ENCODE measurements at regions of chr5 and their contacts with region 1.

Region 1: DNA sequence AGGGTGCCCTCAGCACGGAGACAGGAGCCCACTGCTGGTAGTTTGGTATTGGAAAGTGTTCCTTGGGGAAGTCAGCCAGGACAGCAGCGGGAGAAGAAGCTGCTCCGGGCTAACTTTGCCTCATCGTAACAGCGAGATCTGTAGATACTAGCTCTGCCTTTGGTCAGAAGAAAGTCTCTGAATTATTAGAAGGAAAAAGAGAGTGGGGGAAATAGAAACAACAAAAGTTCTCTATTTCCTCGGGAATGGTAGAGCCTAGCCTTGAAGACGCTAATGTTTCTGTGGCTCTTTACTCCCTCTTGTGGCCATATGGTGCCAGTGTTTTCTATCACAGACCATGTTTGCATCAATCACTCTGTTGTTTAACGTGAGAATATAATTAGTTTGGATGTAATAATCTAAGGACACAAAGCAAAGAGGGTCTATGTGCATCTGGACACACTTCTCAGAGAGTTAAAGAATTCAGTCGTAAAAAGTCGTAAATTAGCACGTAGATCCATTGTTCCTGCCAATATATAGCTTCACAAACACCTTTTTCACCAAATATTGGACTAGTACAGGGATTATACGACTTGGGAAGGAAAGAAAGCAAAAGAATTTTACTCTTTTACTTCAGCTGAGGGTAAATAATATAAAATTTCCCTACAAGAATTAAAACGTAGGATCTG is 40.2 kb upstream of the HSD17B4 start:
- DNase-seq: peak; percentile 58
- H3K4me3 Mint-ChIP-seq: peak overlapping the region; percentile 70
- H3K27ac Mint-ChIP-seq: peak overlapping the region; percentile 13
- H3K4me1 Mint-ChIP-seq: peaks cover 32% of the 10 kb centered on the region
- H3K27me3 Mint-ChIP-seq: peaks cover 6% of the 10 kb centered on the region

Region 2: DNA sequence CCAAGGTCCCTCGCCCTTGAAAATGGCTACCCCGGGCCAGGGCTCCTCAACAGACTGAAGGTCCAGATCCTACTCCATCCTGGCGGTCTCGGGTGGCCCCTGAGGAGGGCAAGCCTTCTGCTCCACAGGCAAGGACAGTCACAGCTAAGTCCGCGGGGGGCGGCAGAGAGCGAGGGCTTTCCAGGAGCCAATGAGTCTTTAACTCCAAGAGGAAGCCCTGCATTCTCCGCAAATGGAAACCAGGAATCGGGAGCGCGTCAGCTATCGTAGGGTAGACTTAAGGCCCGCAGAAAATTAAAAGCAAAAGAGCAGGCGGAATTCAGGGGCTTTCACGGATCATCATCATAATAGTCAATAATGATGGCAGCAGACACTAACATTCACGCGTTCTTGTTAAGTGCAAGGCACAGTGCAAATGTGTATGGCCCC is 144.1 kb before region 1 on chr5:
- CTCF ChIA-PET with region 1: interaction called, 14 read pairs
- POLR2A ChIA-PET with region 1: interaction called, 5 read pairs
- DNase-seq: peak; percentile 86
- H3K4me3 Mint-ChIP-seq: peak overlapping the region; percentile 96
- H3K27ac Mint-ChIP-seq: peak overlapping the region; percentile 89
- H3K4me1 Mint-ChIP-seq: peaks cover 50% of the 10 kb centered on the region
- H3K27me3 Mint-ChIP-seq: peaks cover 2% of the 10 kb centered on the region

Region 3: DNA sequence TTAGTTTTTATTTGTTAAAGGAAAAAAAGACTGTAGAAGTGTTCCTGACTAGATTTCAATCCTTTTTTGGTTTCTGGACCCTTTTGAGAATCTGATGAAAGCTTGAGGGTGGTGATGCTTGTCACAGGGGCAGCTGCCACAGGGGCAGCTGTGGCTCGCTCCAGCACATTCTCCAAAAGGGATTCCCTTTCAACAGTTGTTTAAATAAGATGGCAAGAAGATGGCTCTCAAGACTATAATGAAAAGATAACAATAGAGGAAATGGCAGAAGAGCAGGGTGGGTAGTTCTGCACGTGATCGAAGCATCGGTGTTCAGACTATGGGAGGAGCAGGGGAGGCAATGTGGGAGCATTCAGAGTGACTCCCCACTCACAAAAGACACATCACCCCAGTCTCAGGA is 102.7 kb before region 1 on chr5:
- CTCF ChIA-PET with region 1: interaction called, 46 read pairs
- POLR2A ChIA-PET with region 1: no interaction called
- DNase-seq: no peak
- H3K4me3 Mint-ChIP-seq: peak overlapping the region; percentile 64
- H3K27ac Mint-ChIP-seq: peak overlapping the region; percentile 95
- H3K4me1 Mint-ChIP-seq: peaks cover 94% of the 10 kb centered on the region
- H3K27me3 Mint-ChIP-seq: no peaks in the 10 kb centered on the region

Region 4: GRCh38 chr5:119328753-119329602 is 83.1 kb before region 1 on chr5:
- CTCF ChIA-PET with region 1: interaction called, 17 read pairs
- POLR2A ChIA-PET with region 1: interaction called, 3 read pairs
- DNase-seq: peak; percentile 73
- H3K4me3 Mint-ChIP-seq: peak overlapping the region; percentile 36
- H3K27ac Mint-ChIP-seq: peak overlapping the region; percentile 87
- H3K4me1 Mint-ChIP-seq: peaks cover 85% of the 10 kb centered on the region
- H3K27me3 Mint-ChIP-seq: no peaks in the 10 kb centered on the region

Region 5: DNA sequence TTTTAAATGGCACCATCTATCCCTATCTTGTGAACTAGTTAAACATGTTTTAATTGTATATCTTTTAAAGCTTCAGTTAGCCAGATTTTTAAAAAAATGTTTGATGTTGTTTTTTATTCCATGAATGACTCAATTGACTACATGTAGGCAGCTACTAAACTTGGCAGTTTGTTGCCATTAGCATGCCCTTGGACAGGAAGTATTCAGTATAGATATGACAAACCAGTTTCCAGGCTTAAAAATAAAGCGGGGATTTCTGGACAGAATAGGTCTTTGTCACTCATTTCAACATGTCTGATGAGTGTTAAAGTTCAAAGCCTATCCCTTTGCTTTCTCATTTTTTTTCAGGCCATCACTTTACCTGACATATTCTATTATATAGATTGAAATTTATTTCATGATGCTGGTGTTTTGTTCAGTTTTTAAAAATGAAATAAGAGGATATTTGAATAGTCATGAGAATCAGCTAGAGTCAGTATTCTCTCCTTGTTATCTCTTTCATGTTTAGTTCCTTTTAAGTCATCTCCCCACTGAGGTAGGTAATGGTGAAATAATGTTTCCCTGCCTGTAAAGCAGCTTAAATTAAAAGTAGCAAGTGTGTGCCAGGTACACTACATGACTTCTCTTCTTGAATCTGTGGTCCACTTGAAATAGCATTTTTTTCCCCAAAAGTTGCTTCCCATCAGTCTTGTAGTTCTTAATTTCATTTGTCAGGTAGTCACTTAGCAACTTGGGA is 44.4 kb before region 1 on chr5:
- CTCF ChIA-PET with region 1: interaction called, 16 read pairs
- POLR2A ChIA-PET with region 1: no interaction called
- DNase-seq: no peak
- H3K4me3 Mint-ChIP-seq: peak overlapping the region; percentile 36
- H3K27ac Mint-ChIP-seq: peak overlapping the region; percentile 81
- H3K4me1 Mint-ChIP-seq: peaks cover 82% of the 10 kb centered on the region
- H3K27me3 Mint-ChIP-seq: no peaks in the 10 kb centered on the region

Region 6: DNA sequence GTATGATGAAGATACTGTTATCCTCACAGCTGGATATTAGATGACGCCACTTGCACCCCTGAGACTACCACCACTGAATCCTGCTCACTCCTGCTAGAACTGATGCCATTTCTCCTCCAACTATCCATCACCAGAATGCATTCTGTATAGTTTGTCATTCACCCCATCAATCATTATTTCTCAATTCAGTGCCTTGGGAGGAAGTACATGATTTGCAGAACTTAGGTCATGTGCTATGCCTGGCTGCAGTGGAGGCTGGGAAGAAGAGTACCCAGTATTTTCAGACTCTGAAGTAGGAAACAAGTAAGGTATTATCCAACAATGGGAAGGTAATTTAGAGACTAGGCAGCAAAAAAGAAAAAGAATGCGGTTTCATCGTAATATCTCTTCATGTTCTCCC is 14.0 kb after region 1 on chr5:
- CTCF ChIA-PET with region 1: no interaction called
- POLR2A ChIA-PET with region 1: no interaction called
- DNase-seq: no peak
- H3K4me3 Mint-ChIP-seq: no peak overlapping the region
- H3K27ac Mint-ChIP-seq: no peak overlapping the region
- H3K4me1 Mint-ChIP-seq: no peaks in the 10 kb centered on the region
- H3K27me3 Mint-ChIP-seq: no peaks in the 10 kb centered on the region

Region 7: DNA sequence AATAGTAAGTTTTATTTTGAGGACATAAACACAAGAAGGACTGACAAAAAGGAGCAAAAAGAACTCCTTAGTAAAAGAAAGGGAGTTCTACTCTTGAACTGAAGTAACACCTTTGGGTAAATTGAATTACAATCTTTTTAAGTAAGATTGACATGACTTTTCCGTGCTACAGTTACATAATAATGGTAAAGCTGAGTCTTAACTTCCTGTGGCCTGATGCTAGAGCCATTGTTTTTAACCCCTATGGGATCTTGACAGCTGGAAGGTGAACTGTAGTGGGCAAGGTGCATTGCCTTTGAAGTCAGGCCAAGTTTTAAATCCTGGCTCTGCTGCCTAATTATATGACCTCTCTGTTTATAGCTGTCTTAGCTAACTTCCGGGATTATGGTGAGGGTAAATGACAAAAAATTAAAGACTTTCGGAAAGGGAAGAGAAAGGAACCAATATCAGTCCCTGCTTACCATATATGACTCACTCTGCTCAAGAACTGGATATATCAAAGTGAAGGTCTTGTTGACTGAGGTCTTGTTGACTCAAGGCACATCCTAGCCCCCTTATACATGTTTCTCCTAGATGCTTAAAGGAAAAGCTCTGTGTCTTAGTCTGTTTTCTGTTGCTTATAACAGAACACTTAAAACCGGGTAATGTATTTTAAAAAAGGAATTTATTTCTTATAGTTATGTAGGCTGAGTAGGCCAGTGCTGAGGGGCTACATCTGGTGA is 47.0 kb after region 1 on chr5:
- CTCF ChIA-PET with region 1: no interaction called
- POLR2A ChIA-PET with region 1: no interaction called
- DNase-seq: no peak
- H3K4me3 Mint-ChIP-seq: no peak overlapping the region
- H3K27ac Mint-ChIP-seq: no peak overlapping the region
- H3K4me1 Mint-ChIP-seq: peaks cover 3% of the 10 kb centered on the region
- H3K27me3 Mint-ChIP-seq: no peaks in the 10 kb centered on the region